CD4-positive, alpha-beta memory T cell (primary cell): ENCODE measurements at regions of chr2 and their contacts with region 1.

Region 1: GRCh38 chr2:3780477-3781402 is 77.4 kb downstream of the DCDC2C start:
- DNase-seq: peak in 4 of 5 donors; percentile 3 to 31 (median 28)
- H3K4me3 ChIP-seq: no peak overlapping the region
- H3K4me3 Mint-ChIP-seq: peak overlapping the region; percentile 27 to 83 (median 68)
- H3K27ac ChIP-seq: no peak overlapping the region
- H3K27ac Mint-ChIP-seq: peak overlapping the region in 1 of 7 donors; percentile 33
- H3K4me1 ChIP-seq: no peaks in the 10 kb centered on the region
- H3K4me1 Mint-ChIP-seq: peaks cover 2 to 13% (median 10%) of the 10 kb centered on the region in 4 donors
- H3K27me3 ChIP-seq: no peaks in the 10 kb centered on the region
- H3K27me3 Mint-ChIP-seq: peaks cover 5 to 10% of the 10 kb centered on the region in 2 donors

Region 2: DNA sequence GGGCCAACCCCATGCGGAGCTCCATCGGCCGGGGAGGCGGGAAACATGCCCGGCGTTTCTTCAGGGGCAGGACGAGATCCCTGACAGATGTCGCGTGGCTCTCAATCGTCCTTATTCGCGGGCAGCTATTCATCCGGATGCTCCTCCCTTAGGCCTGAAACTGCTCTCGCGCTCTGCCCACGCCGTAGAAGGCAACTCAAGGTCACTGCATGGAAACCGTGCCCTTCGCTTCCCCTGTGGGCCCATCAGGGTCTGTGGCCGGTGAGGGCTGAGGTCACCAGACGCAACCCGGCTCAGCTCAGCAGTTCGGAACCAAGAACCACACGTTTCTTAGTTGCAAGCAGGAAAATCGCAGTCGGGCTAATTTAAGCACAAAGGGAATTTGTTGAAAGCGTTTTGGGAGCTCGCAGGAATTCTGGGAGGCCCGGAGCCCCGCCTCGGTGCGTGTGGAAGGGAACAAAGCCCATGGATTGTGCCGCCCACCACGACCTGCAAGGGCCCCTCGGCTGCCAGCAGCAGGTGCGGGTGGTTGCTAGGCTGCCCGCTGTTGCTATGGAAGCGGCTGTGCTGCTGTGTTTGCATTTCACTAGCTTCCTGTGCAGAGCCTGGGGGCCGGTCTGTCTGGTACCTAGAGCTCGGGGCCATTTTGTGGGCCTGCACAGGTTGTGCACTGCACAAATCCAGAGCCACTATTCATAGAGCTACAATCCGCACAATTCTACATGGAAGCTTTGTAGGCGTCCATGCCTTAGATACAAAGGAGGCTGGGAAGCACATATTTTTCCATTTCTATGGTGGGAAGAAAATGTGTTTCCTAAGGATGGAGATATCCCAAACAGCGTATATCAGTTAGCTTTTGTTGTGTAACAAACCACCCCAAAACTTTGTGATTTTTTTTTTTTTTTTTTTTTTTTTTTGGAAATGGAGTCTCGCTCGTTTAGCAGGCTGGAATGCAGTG is 128.8 kb before region 1 on chr2:
- CTCF ChIA-PET with region 1: no interaction called
- POLR2A ChIA-PET with region 1: no interaction called
- intact Hi-C with region 1: no loop called
- DNase-seq: peak; percentile 64 to 82 (median 80)
- H3K4me3 ChIP-seq: peak overlapping the region in 1 of 2 donors; percentile 65
- H3K4me3 Mint-ChIP-seq: peak overlapping the region; percentile 87 to 95 (median 92)
- H3K27ac ChIP-seq: peak overlapping the region; percentile 27
- H3K27ac Mint-ChIP-seq: peak overlapping the region; percentile 87 to 100 (median 96)
- H3K4me1 ChIP-seq: peaks cover 13% of the 10 kb centered on the region
- H3K4me1 Mint-ChIP-seq: peaks cover 8 to 18% (median 13%) of the 10 kb centered on the region in 4 donors
- H3K27me3 ChIP-seq: no peaks in the 10 kb centered on the region
- H3K27me3 Mint-ChIP-seq: peaks cover 0 to 3% of the 10 kb centered on the region in 2 donors

Region 3: DNA sequence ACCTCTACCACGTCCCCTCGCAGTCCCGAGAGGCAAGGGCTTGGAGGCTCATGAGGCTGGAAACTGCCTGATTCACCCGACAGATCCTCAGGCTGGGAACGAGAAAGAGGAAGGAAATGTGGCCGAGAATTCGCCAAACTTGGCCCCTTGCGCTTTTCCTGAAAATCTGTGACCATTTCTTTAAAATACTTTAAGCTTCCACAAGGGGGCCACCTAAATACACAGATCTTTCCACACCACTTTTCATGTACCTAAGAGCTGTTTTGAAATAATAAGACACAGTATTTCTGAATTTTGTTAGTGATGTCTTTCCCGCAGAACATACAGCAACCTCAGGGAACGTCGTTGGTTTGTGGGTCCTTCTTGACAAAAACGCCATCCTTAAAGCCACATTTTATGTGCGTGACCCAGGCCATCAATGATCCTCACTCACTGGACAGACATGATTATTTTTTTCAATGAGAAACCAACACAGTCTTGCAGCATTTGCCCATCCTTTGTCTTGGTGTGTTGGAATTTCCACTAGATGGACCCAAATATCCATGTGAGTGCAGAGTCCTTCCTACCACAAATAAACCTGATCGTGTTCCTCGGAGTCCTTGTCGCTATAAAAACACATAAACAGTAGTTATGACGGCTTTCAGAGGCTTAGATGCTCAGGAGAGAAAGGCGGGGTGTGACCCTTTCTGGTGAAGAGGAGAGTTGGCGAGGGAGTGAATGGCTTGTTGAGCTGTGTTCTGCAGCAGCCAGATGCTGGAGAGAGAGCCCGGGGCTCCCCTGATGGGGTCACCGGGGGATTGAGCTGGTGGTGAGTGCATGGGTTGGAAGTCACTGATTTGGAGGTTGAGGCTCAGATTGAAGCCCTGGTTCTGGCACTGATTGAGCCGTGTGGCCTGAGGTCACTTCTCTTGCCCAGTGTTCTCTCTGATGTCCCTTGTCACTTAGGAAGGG is 52.4 kb before region 1 on chr2:
- CTCF ChIA-PET with region 1: interaction called, 14 read pairs
- POLR2A ChIA-PET with region 1: no interaction called
- intact Hi-C with region 1: no loop called
- DNase-seq: no peak
- H3K4me3 ChIP-seq: no peak overlapping the region
- H3K4me3 Mint-ChIP-seq: no peak overlapping the region
- H3K27ac ChIP-seq: no peak overlapping the region
- H3K27ac Mint-ChIP-seq: no peak overlapping the region
- H3K4me1 ChIP-seq: no peaks in the 10 kb centered on the region
- H3K4me1 Mint-ChIP-seq: peaks cover 0 to 3% (median 0%) of the 10 kb centered on the region in 4 donors
- H3K27me3 ChIP-seq: no peaks in the 10 kb centered on the region
- H3K27me3 Mint-ChIP-seq: peaks cover 5 to 13% of the 10 kb centered on the region in 2 donors

Region 4: DNA sequence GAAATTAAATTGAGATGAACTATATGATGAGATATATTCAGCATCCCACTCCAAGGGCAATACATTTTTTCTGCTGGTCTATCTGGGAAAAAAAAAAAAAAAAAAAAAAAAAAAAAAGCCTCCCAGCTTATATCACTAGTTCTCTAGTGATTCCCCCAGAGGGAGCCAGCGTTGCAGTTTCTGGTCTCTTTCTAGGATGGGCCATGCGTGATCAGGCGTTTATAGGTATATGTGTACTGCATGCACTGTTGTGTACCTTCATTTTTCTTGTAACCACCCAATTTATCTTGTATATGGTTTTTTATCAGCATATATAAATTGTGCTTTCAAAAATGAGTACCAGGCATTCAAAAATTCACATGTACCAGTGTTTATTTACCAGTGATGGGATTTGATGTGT is 42.3 kb before region 1 on chr2:
- CTCF ChIA-PET with region 1: no interaction called
- POLR2A ChIA-PET with region 1: no interaction called
- intact Hi-C with region 1: loop called (anchors 5 kb)
- DNase-seq: no peak
- H3K4me3 ChIP-seq: no peak overlapping the region
- H3K4me3 Mint-ChIP-seq: no peak overlapping the region
- H3K27ac ChIP-seq: no peak overlapping the region
- H3K27ac Mint-ChIP-seq: no peak overlapping the region
- H3K4me1 ChIP-seq: no peaks in the 10 kb centered on the region
- H3K4me1 Mint-ChIP-seq: no peaks in the 10 kb centered on the region
- H3K27me3 ChIP-seq: no peaks in the 10 kb centered on the region
- H3K27me3 Mint-ChIP-seq: peaks cover 7 to 23% of the 10 kb centered on the region in 2 donors

Region 5: GRCh38 chr2:3759331-3759730 is 21.4 kb before region 1 on chr2:
- CTCF ChIA-PET with region 1: no interaction called
- POLR2A ChIA-PET with region 1: no interaction called
- intact Hi-C with region 1: no loop called
- DNase-seq: no peak
- H3K4me3 ChIP-seq: no peak overlapping the region
- H3K4me3 Mint-ChIP-seq: no peak overlapping the region
- H3K27ac ChIP-seq: no peak overlapping the region
- H3K27ac Mint-ChIP-seq: no peak overlapping the region
- H3K4me1 ChIP-seq: no peaks in the 10 kb centered on the region
- H3K4me1 Mint-ChIP-seq: no peaks in the 10 kb centered on the region
- H3K27me3 ChIP-seq: no peaks in the 10 kb centered on the region
- H3K27me3 Mint-ChIP-seq: peaks cover 3 to 6% of the 10 kb centered on the region in 2 donors

Region 6: GRCh38 chr2:4300616-4301015 is 519.9 kb after region 1 on chr2:
- CTCF ChIA-PET with region 1: no interaction called
- POLR2A ChIA-PET with region 1: no interaction called
- intact Hi-C with region 1: no loop called
- DNase-seq: no peak
- H3K4me3 ChIP-seq: no peak overlapping the region
- H3K4me3 Mint-ChIP-seq: no peak overlapping the region
- H3K27ac ChIP-seq: no peak overlapping the region
- H3K27ac Mint-ChIP-seq: no peak overlapping the region
- H3K4me1 ChIP-seq: no peaks in the 10 kb centered on the region
- H3K4me1 Mint-ChIP-seq: no peaks in the 10 kb centered on the region
- H3K27me3 ChIP-seq: no peaks in the 10 kb centered on the region
- H3K27me3 Mint-ChIP-seq: no peaks in the 10 kb centered on the region